Ovary (tissue), 10 donors: ENCODE measurements at regions of chr15 and their contacts with region 1.

Region 1: DNA sequence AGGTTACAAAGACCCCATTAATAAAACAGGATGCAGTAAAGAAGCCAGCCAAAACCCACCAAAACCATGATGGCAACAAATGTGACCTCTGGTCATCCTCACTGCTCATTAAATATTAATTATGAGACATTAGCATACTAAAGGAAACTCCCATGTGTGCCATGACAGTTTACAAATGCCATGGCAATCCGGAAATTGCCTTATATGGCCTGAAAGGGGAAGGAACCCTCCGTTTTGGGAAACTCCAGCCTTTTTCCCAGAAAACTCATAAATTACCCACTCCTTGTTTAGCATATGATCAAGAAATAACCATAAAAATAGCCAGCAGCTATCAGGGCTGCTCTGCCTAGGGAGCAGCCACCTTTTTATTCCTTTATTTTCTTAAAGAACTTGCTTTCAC is 992.7 kb downstream of the NTRK3 start:
- DNase-seq: no peak
- H3K4me3 ChIP-seq: no peak overlapping the region
- H3K27ac ChIP-seq: no peak overlapping the region
- H3K4me1 ChIP-seq: no peaks in the 10 kb centered on the region
- H3K27me3 ChIP-seq: no peaks in the 10 kb centered on the region
- CTCF ChIP-seq: no peak
- EP300 ChIP-seq: no peak
- POLR2A ChIP-seq: no peak

Region 2: GRCh38 chr15:85905716-85906450 is 1357.9 kb before region 1 on chr15:
- intact Hi-C with region 1: loop called in 1 of 4 experiments (anchors 5 kb)
- DNase-seq: no peak
- H3K4me3 ChIP-seq: no peak overlapping the region
- H3K27ac ChIP-seq: no peak overlapping the region
- H3K4me1 ChIP-seq: no peaks in the 10 kb centered on the region
- H3K27me3 ChIP-seq: no peaks in the 10 kb centered on the region
- CTCF ChIP-seq: no peak
- EP300 ChIP-seq: no peak
- POLR2A ChIP-seq: no peak

Region 3: GRCh38 chr15:87312221-87312620 is 48.4 kb after region 1 on chr15:
- intact Hi-C with region 1: no loop called
- DNase-seq: no peak
- H3K4me3 ChIP-seq: no peak overlapping the region
- H3K27ac ChIP-seq: no peak overlapping the region
- H3K4me1 ChIP-seq: no peaks in the 10 kb centered on the region
- H3K27me3 ChIP-seq: no peaks in the 10 kb centered on the region
- CTCF ChIP-seq: no peak
- EP300 ChIP-seq: no peak
- POLR2A ChIP-seq: no peak